ENCODE measurements at regions of chr6 and their contacts with region 1.

Region 1: DNA sequence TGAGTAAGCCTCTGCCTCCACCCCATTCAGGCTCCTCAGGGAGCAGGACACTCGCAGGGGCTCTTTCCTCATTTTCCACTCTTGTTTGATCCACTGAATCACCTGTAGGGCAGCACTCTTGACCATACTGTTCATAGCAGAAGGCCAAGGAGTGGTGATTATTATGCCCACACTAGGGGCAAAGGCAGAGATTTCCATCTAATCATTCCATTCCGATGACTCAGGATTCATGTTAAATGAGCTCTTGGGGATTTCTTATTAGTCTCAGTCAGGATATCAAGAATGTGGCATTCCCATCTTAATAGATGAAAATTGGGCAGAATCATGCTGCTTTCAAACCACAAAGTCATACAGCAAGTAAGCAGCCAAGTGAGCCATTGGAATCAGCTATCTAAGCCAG is 101.9 kb upstream of the MOCS1 start:
- DNase-seq: no peak
- H3K4me3 ChIP-seq: no peak overlapping the region
- H3K27ac ChIP-seq: no peak overlapping the region
- H3K4me1 ChIP-seq: no peaks in the 10 kb centered on the region
- H3K27me3 ChIP-seq: no peaks in the 10 kb centered on the region
- CTCF ChIP-seq: no peak
- POLR2A ChIP-seq: no peak

Region 2: GRCh38 chr6:38155144-38155543 is 1881.0 kb before region 1 on chr6:
- intact Hi-C with region 1: no loop called
- DNase-seq: no peak
- H3K4me3 ChIP-seq: no peak overlapping the region
- H3K27ac ChIP-seq: no peak overlapping the region
- H3K4me1 ChIP-seq: no peaks in the 10 kb centered on the region
- H3K27me3 ChIP-seq: no peaks in the 10 kb centered on the region
- CTCF ChIP-seq: no peak
- POLR2A ChIP-seq: no peak

Region 3: GRCh38 chr6:39887381-39888070 is 148.7 kb before region 1 on chr6:
- intact Hi-C with region 1: no loop called
- DNase-seq: no peak
- H3K4me3 ChIP-seq: no peak overlapping the region
- H3K27ac ChIP-seq: peak overlapping the region; percentile 45
- H3K4me1 ChIP-seq: peaks cover 10% of the 10 kb centered on the region
- H3K27me3 ChIP-seq: no peaks in the 10 kb centered on the region
- CTCF ChIP-seq: no peak
- POLR2A ChIP-seq: no peak

Region 4: GRCh38 chr6:40077315-40077714 is 41.1 kb after region 1 on chr6:
- intact Hi-C with region 1: loop called (anchors 2 kb)
- DNase-seq: no peak
- H3K4me3 ChIP-seq: no peak overlapping the region
- H3K27ac ChIP-seq: no peak overlapping the region
- H3K4me1 ChIP-seq: no peaks in the 10 kb centered on the region
- H3K27me3 ChIP-seq: no peaks in the 10 kb centered on the region
- CTCF ChIP-seq: no peak
- POLR2A ChIP-seq: no peak